Kidney (tissue), 22 donors: ENCODE measurements at regions of chr4 and their contacts with region 1.

Region 1: DNA sequence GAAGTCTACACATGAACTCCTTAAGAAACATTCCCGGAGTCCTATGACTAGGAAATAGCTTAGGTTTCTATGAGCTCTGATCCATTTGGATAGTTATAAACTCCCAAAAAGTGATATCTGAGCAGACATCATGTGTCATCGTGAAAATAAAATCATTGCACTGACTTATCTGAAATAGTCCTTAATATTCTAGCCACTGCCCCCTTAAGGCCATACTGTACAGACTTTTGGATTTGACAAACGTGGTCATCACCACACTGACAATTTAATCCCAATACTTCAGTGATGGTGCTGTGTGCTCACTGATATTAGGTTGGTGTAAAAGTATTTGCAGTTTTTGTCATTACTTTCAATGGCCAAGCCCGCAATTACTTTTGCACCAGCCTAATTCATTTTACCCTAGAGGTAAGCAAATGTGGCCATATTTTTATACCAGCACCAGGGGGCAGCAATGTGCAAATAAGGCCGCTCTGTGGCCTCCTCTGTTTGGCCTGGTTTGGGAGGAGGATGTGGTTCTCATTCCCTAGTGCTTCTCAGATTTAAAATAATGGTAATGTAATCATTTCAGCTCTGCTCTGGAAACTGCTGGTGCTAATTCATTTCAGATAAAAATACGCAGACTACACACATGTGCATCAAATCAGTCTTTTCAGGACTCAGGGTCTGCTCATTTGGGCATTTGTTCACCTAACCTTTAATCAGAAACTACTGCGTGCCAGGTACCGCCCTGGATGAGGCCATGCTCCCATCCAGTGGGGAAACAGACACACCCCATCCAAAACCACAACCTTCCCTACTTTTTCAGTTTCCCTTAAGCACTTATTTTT is 196.4 kb upstream of the C1QTNF7 start:
- DNase-seq: peak; percentile 79 to 93 (median 84)
- H3K4me3 ChIP-seq: no peak overlapping the region
- H3K27ac ChIP-seq: no peak overlapping the region
- H3K4me1 ChIP-seq: peaks cover 0 to 12% (median 3%) of the 10 kb centered on the region in 3 donors
- H3K27me3 ChIP-seq: no peaks in the 10 kb centered on the region
- CTCF ChIP-seq: peak; percentile 80

Region 2: GRCh38 chr4:15182600-15183220 is 48.8 kb before region 1 on chr4:
- intact Hi-C with region 1: no loop called
- DNase-seq: no peak
- H3K4me3 ChIP-seq: no peak overlapping the region
- H3K27ac ChIP-seq: no peak overlapping the region
- H3K4me1 ChIP-seq: no peaks in the 10 kb centered on the region
- H3K27me3 ChIP-seq: no peaks in the 10 kb centered on the region
- CTCF ChIP-seq: no peak

Region 3: DNA sequence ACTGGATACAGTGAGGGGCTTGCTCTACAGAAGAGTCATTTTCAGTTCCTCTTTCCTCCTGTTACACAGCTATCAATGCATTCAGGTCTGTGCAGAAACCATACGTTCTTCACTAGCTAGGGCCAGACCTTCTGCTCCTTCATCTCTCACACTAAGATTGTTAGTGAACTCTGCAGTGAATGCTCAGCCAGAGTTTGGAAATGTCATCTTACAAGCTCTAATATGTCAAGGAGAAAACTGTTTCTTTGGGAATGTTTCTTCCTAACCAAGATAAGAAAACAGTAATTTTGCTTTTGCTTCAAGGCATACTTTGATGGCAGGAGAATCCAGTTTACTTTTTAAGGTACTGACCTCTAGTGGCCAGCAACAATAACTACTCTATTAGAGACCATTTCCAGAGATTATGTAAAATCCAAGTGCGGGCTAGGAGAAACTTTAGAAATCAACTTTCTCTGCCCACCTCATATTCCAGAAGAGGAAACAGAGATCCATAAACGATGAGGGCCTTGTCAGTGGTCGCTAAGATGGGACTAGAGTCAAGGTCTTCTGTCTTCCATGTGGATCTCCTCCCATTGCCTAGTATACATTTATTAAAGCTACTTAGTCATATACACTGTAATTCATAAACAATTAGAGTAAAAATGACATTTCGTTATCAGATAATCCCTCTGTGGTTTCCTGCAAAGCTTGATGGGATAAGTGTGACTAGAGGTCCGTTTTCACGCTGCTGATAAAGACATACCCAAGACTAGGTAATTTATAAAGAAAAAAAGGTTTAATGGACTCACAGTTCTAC is 226.1 kb after region 1 on chr4:
- intact Hi-C with region 1: loop called (anchors 10 kb)
- DNase-seq: peak in 2 of 5 donors; percentile 73 to 85
- H3K4me3 ChIP-seq: no peak overlapping the region
- H3K27ac ChIP-seq: no peak overlapping the region
- H3K4me1 ChIP-seq: peaks cover 0 to 10% (median 0%) of the 10 kb centered on the region in 3 donors
- H3K27me3 ChIP-seq: no peaks in the 10 kb centered on the region
- CTCF ChIP-seq: peak; percentile 78

Region 4: GRCh38 chr4:15754323-15754722 is 522.8 kb after region 1 on chr4:
- intact Hi-C with region 1: no loop called
- DNase-seq: no peak
- H3K4me3 ChIP-seq: no peak overlapping the region
- H3K27ac ChIP-seq: peak overlapping the region; percentile 55 to 63
- H3K4me1 ChIP-seq: peaks cover 0 to 2% (median 0%) of the 10 kb centered on the region in 3 donors
- H3K27me3 ChIP-seq: no peaks in the 10 kb centered on the region
- CTCF ChIP-seq: no peak